KBM-7 (cell line): ENCODE measurements at regions of chr17 and their contacts with region 1.

Region 1: DNA sequence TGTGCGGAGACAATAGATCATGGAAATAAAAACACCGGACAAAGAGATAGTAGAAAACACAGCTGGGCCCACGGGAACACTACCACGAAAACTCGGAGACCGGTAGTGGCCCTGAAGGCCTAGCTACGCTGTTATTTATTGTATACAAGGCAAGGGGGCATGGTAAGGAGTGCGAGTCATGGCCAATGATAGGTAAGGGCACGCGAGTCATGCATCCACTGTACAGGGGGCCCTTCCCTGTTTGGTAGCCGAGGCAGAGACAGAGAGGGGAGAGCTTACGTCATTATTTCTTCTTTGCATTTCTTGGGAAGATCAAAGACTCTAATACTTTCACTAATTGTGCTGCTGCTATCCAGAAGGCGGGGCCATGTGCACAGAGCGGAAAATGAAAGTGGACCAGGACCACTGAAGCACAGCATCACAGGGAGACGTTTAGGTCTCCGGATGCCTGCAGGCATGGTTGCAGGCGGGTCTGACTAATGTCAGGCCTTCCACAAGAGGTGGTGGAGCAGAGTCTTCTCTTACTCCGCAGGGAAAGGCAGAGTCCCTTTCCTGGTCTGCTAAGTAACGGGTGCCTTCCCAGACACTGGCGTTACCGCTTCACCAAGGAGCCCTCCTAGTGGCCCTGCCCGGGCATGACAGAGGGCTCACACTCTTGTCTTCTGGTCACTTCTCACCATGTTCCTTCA is 74.4 kb upstream of the ARL4D start:
- DNase-seq: no peak

Region 2: DNA sequence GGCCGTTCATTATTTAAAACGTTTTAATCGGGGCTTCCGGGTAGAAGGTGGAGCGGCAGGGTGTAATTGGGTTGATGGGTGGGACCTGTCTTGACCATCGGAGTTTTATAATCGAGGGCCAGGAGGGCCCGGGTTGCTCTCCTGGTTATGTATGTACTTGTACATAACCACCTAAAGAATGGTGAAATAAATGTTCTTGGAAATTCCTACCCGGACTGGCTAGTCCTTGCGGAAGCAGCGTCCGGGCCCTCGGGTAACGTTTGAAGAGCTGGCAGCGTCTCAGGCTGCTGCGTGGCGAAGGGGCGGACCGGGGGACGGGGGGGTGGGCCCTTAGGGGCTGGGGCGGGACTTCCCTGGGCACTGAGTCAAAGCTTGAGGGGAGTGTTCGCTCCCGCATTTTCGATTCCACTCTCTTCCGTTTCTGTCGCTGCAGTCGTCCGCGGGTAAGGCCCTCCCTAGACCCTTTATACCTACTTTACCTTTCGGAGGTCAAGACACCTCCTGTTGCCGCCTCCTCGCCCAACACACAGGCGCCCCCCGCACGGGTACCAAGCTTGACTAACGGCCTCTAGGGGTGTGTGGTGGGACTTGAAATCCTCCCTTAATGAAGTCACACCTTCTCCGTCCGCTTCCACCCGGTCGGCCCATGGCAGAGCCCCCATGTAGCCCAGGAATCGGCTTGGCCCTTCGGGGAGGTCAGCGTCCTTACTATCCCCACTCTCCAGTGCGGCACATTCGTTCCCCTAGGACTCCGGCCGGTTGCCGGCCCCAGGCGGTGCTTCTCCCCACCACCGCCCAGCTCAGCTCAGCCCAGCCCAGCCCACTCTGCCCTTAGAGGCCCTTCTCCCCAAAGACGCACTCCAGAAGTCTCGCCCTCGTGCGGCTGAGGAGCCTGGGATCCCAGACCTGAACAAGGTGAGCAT is 112.6 kb before region 1 on chr17 and contains the start of gene TMEM106A:
- in situ Hi-C with region 1: loop called (anchors 25 kb)
- DNase-seq: peak; percentile 81